ENCODE measurements at regions of chr9 and their contacts with region 1.

Region 1: GRCh38 chr9:121267689-121268597 is at the start of gene GSN:
- DNase-seq: peak; percentile 50
- ATAC-seq: peak; percentile 81
- H3K4me3 ChIP-seq: peak within 1 kb of the TSS; percentile 81
- H3K27ac ChIP-seq: no peak within 1 kb of the TSS; the same call in 1 of the 2 replicates
- H3K4me1 ChIP-seq: peaks cover 28% of the 10 kb centered on the region
- H3K27me3 ChIP-seq: no peaks in the 10 kb centered on the region
- CTCF ChIP-seq: no peak
- total RNA-seq, gene GSN: 36.5 and 40.3 TPM in 2 replicates

Region 2: DNA sequence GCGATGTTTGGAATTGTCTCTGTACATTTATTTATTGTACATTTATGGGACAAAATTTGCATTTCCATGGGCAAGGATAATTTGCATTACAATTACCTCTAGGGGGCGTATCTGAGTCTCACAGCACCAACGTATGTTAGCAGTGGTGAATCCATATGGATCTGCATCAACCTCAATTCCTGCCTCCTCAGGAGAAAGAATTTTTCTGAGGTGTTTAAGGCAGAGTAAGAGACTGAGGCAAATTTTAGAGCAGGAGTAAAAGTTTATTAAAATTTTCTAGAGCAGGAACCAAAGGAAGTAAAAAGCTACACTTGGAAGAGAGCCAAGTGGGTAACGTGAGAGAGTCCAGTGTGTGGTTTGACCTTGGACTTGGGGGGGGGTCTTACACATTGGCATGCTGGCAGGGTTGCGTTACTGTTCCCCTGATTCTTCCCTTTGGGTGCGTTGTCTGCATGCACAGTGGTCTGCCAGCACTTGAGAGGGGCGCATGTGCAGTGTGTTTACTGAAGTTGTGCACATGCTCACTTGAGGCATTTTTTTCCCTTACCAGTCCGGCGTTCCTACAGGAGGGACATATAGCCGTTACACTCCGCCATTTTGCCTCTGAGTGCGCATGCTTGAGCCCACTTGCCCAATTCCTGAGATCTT is 45.3 kb before region 1 on chr9:
- CTCF ChIA-PET with region 1: no interaction called
- POLR2A ChIA-PET with region 1: no interaction called
- intact Hi-C with region 1: loop called (anchors 5 kb)
- DNase-seq: peak; percentile 61
- ATAC-seq: no peak
- H3K4me3 ChIP-seq: no peak overlapping the region
- H3K27ac ChIP-seq: no peak overlapping the region
- H3K4me1 ChIP-seq: peaks cover 7% of the 10 kb centered on the region
- H3K27me3 ChIP-seq: no peaks in the 10 kb centered on the region
- CTCF ChIP-seq: peak; percentile 80

Region 3: DNA sequence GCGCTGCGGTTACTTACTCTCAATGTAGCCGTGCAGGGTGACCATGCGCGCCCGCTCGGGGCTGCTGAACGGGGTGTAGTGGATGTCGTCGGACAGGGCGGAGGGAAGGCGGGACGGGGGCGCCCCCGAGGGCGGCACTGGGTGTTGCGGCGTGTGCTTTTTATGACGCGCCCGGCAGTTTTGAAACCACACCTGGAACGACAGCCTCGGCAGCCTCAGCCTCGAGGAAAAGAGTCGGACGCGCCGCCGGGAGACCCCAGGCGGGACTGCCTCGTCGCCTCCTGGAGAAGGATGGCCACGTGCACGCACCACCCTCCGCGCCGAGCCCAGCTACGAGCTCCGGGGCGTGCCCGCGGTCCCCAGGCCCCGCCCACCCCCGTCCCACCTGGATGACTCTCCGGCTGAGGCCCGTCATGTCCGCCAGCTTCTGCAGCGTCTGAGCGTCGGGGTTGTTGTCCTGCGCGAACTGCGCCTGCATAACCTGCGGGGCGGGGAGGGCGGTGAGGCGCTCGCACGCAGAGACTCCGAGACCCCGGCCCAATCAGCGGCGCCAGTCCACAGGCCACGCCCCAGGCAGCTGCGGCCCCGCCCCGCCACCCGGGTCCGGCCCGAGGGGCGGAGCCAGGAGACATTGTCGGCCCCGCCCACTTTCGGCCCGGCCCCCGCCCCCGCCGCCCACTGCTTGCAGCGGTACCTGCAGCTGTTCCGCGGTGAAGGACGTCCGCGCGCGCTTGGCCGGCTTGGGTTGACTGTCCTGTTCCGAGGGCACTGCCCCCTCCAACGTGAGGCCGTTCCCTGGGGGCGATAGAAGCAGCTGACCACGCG is 945.9 kb after region 1 on chr9:
- CTCF ChIA-PET with region 1: interaction called, 10 read pairs
- POLR2A ChIA-PET with region 1: no interaction called
- intact Hi-C with region 1: no loop called
- DNase-seq: peak; percentile 89
- ATAC-seq: peak; percentile 92
- H3K4me3 ChIP-seq: peak overlapping the region; percentile 67
- H3K27ac ChIP-seq: no peak overlapping the region
- H3K4me1 ChIP-seq: peaks cover 31% of the 10 kb centered on the region
- H3K27me3 ChIP-seq: no peaks in the 10 kb centered on the region
- CTCF ChIP-seq: no peak

Measured in PC-3 (cell line).